Esophagus muscularis mucosa (tissue), 4 donors: ENCODE measurements at regions of chr12 and their contacts with region 1.

Region 1: GRCh38 chr12:88393017-88393767 is 187.1 kb downstream of the KITLG start:
- DNase-seq: no peak
- H3K4me3 ChIP-seq: no peak overlapping the region
- H3K27ac ChIP-seq: no peak overlapping the region
- H3K4me1 ChIP-seq: peaks cover 0 to 13% (median 7%) of the 10 kb centered on the region in 4 donors
- H3K27me3 ChIP-seq: no peaks in the 10 kb centered on the region
- CTCF ChIP-seq: peak in 1 of 3 experiments; percentile 19
- EP300 ChIP-seq: no peak
- POLR2A ChIP-seq: no peak

Region 2: GRCh38 chr12:88186003-88186402 is 207.2 kb before region 1 on chr12:
- intact Hi-C with region 1: loop called (anchors 10 kb)
- DNase-seq: no peak
- H3K4me3 ChIP-seq: no peak overlapping the region
- H3K27ac ChIP-seq: no peak overlapping the region
- H3K4me1 ChIP-seq: no peaks in the 10 kb centered on the region
- H3K27me3 ChIP-seq: no peaks in the 10 kb centered on the region
- CTCF ChIP-seq: no peak
- EP300 ChIP-seq: no peak
- POLR2A ChIP-seq: no peak

Region 3: GRCh38 chr12:88310069-88310468 is 83.1 kb before region 1 on chr12:
- intact Hi-C with region 1: no loop called
- DNase-seq: no peak
- H3K4me3 ChIP-seq: no peak overlapping the region
- H3K27ac ChIP-seq: no peak overlapping the region
- H3K4me1 ChIP-seq: peaks cover 0 to 4% (median 1%) of the 10 kb centered on the region in 4 donors
- H3K27me3 ChIP-seq: no peaks in the 10 kb centered on the region
- CTCF ChIP-seq: no peak
- EP300 ChIP-seq: no peak
- POLR2A ChIP-seq: no peak